ENCODE measurements at regions of chrX and their contacts with region 1.

Region 1: DNA sequence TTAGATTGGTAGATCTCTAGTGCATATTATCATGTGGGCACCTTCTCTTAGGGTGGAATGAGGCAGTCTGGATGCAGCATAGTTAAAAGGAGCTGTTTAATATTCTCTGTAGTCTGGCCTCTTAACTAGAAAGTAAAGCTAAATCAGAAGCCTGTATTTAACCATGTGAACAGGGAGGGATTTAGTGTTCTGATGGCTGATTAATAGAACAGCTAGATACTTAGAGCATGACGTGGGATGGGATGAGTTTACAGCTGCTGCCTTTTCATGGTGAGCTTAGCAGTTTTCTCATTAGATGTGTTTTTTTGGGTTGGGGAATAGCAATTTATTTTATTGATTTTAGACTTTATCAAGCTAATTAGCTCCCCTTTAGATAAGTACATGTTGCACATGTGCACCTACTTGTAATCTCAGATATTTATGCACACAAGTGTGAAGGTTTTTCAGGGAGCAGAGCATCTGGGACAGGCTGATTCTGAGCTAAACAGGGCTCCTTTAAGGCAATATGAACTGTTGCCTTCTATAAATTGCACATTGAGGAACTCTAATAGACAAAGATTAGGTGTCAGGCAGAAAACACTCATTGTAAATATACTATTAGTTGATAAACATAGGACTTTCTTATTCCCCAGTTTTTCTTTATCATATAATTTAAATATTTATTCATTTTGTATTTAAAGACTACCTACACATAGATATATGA is 34.1 kb downstream of the YIPF6 start:
- DNase-seq: no peak
- H3K4me3 ChIP-seq: no peak overlapping the region
- H3K27ac ChIP-seq: no peak overlapping the region
- H3K4me1 ChIP-seq: no peaks in the 10 kb centered on the region
- H3K27me3 ChIP-seq: no peaks in the 10 kb centered on the region
- CTCF ChIP-seq: no peak
- POLR2A ChIP-seq: no peak

Region 2: DNA sequence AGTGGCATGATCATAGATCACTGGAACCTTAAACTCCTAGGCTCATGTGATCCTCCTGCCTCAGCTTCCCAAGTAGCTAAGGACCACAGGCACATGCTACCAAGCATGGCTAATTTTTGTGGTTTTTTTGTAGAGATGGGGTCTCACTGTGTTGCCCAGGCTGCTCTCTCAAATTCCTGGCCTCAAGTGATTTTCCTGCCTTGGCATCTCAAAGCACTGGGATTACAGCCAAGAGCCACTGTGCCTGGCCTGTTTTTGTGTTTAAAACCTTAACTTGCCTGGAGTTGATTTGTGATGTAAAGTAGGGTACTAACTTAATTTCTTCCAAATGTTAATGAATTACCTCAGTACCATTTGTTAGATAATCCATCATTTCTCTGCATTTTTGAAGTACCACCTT is 1934.0 kb after region 1 on chrX:
- intact Hi-C with region 1: loop called (anchors 5 kb)
- DNase-seq: no peak
- H3K4me3 ChIP-seq: no peak overlapping the region
- H3K27ac ChIP-seq: no peak overlapping the region
- H3K4me1 ChIP-seq: no peaks in the 10 kb centered on the region
- H3K27me3 ChIP-seq: no peaks in the 10 kb centered on the region
- CTCF ChIP-seq: no peak
- POLR2A ChIP-seq: no peak

Measured in vagina (tissue), 2 donors.